Head of caudate nucleus (tissue), 42 donors: ENCODE measurements at regions of chr13 and their contacts with region 1.

Region 1: GRCh38 chr13:80979035-80979641 is 638.2 kb upstream of the SPRY2 start:
- DNase-seq: peak; percentile 4 to 83 (median 62)

Region 2: GRCh38 chr13:81012031-81012430 is 32.9 kb after region 1 on chr13:
- intact Hi-C with region 1: loop called (anchors 5 kb)
- DNase-seq: no peak